Common myeloid progenitor, CD34-positive (primary cell): ENCODE measurements at regions of chr18 and their contacts with region 1.

Region 1: DNA sequence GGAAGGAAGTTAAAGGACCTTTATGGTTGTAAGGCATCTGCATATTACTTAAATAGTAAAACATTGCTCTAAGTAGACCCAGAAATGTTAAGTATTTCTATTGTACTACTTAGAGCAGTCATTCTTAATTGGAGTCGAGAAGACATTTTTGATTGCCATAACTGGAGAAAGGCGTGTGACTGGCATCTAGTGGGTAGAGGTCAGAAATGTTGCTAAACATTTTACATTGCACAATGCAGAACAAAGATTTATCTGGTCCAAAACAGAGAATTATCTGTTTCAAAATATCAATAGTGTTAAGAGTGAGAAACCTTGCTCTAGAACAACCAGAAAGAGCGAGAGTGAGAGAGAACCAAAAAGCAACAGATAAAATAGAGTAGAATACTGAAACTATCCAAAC is 23.3 kb upstream of the ROCK1 start:
- DNase-seq: peak; percentile 42 to 70 (median 61)
- H3K4me3 ChIP-seq: no peak overlapping the region
- H3K27ac ChIP-seq: no peak overlapping the region
- H3K4me1 ChIP-seq: no peaks in the 10 kb centered on the region
- H3K27me3 ChIP-seq: no peaks in the 10 kb centered on the region

Region 2: DNA sequence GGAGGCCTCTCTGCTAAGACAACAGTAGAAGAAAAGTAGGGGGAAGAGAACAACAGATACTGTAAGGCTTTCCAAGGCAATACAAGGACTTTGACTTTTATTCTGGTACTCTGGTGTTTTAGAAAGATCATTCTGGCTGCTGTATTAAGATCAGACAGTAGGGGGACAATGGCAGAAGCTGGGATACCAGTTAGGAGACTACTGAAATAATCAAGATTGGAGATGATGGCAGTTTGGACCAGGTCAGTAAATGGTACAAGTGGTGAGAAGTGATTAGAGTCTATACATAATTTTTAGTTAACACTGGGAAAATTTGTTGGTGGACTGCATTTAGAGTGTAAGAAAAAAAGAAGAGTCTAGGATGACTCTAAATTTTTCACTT is 163.0 kb before region 1 on chr18:
- CTCF ChIA-PET with region 1: interaction called, 15 read pairs
- POLR2A ChIA-PET with region 1: no interaction called
- DNase-seq: peak; percentile 31 to 62 (median 54)
- H3K4me3 ChIP-seq: no peak overlapping the region
- H3K27ac ChIP-seq: no peak overlapping the region
- H3K4me1 ChIP-seq: no peaks in the 10 kb centered on the region
- H3K27me3 ChIP-seq: no peaks in the 10 kb centered on the region

Region 3: DNA sequence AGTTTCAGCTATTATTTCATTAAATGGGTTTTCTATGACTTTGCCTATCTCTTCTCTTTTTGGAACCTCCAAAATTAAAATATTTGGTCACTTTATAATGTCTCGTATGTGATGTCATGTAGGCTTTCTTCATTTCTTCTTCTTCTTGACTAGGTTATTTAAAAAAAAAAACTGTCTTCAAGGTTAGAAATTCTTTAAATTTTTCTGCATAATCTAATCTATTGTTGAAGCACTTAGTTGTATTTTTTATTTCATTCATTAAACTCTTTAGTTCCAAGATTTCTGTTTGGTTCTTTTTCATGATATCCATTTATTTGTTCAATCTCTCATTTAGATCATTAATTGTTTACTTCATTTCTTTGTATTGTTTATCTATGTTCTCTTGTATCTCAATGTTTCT is 20.5 kb after region 1 on chr18:
- CTCF ChIA-PET with region 1: no interaction called
- POLR2A ChIA-PET with region 1: no interaction called
- DNase-seq: no peak
- H3K4me3 ChIP-seq: no peak overlapping the region
- H3K27ac ChIP-seq: no peak overlapping the region
- H3K4me1 ChIP-seq: no peaks in the 10 kb centered on the region
- H3K27me3 ChIP-seq: no peaks in the 10 kb centered on the region